ENCODE measurements at regions of chr15 and their contacts with region 1.

Region 1: GRCh38 chr15:63048115-63048775 is 5.7 kb downstream of the TPM1 start:
- DNase-seq: peak; percentile 92 to 97 (median 95)
- ATAC-seq: peak; percentile 91
- H3K4me3 ChIP-seq: peak overlapping the region; percentile 89 to 97
- H3K27ac ChIP-seq: peak overlapping the region; percentile 88 to 91
- H3K4me1 ChIP-seq: peaks cover 42 to 60% of the 10 kb centered on the region in 2 donors
- H3K27me3 ChIP-seq: peaks cover 5 to 44% of the 10 kb centered on the region in 2 donors
- CTCF ChIP-seq: peak; percentile 80 to 91

Region 2: DNA sequence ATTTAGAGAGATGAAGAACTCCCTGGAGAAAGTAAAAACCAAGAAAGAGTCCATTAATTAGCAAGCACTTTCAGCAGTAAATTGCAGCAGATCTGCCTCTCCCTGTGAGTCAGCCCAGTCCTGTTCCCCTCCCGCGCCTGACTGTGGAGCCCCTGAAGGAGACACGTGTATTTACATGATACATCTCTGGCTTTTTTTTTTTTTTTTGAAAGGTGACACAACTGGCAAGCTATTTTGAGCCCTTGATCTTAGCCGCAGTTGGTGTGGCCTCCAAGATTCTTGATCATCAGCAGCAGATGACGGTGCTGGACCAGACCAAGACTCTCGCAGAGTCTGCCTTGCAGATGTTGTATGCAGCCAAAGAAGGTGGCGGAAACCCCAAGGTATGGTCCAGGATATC is 277.5 kb before region 1 on chr15:
- intact Hi-C with region 1: no loop called
- DNase-seq: no peak
- ATAC-seq: no peak
- H3K4me3 ChIP-seq: no peak overlapping the region
- H3K27ac ChIP-seq: no peak overlapping the region
- H3K4me1 ChIP-seq: no peaks in the 10 kb centered on the region
- H3K27me3 ChIP-seq: no peaks in the 10 kb centered on the region
- CTCF ChIP-seq: no peak

Region 3: GRCh38 chr15:62782039-62782791 is 266.0 kb before region 1 on chr15:
- intact Hi-C with region 1: loop called in 1 of 2 experiments (anchors 10 kb)
- DNase-seq: peak in 3 of 4 donors; percentile 47 to 80 (median 64)
- ATAC-seq: peak; percentile 94
- H3K4me3 ChIP-seq: no peak overlapping the region
- H3K27ac ChIP-seq: no peak overlapping the region
- H3K4me1 ChIP-seq: peaks cover 0 to 9% of the 10 kb centered on the region in 2 donors
- H3K27me3 ChIP-seq: no peaks in the 10 kb centered on the region
- CTCF ChIP-seq: peak; percentile 42 to 49

Region 4: GRCh38 chr15:63093486-63094205 is 45.4 kb after region 1 on chr15:
- intact Hi-C with region 1: loop called in 1 of 2 experiments (anchors 5 kb)
- DNase-seq: peak; percentile 73 to 87 (median 81)
- ATAC-seq: peak; percentile 96
- H3K4me3 ChIP-seq: no peak overlapping the region
- H3K27ac ChIP-seq: peak overlapping the region in 1 of 2 donors; percentile 2
- H3K4me1 ChIP-seq: peaks cover 4 to 9% of the 10 kb centered on the region in 2 donors
- H3K27me3 ChIP-seq: no peaks in the 10 kb centered on the region
- CTCF ChIP-seq: peak; percentile 80 to 83

Region 5: GRCh38 chr15:63107895-63108546 is 59.8 kb after region 1 on chr15:
- intact Hi-C with region 1: no loop called
- DNase-seq: peak in 3 of 4 donors; percentile 63 to 66 (median 65)
- ATAC-seq: peak; percentile 79
- H3K4me3 ChIP-seq: no peak overlapping the region
- H3K27ac ChIP-seq: peak overlapping the region in 1 of 2 donors; percentile 33
- H3K4me1 ChIP-seq: peaks cover 0 to 3% of the 10 kb centered on the region in 2 donors
- H3K27me3 ChIP-seq: no peaks in the 10 kb centered on the region
- CTCF ChIP-seq: no peak

Region 6: DNA sequence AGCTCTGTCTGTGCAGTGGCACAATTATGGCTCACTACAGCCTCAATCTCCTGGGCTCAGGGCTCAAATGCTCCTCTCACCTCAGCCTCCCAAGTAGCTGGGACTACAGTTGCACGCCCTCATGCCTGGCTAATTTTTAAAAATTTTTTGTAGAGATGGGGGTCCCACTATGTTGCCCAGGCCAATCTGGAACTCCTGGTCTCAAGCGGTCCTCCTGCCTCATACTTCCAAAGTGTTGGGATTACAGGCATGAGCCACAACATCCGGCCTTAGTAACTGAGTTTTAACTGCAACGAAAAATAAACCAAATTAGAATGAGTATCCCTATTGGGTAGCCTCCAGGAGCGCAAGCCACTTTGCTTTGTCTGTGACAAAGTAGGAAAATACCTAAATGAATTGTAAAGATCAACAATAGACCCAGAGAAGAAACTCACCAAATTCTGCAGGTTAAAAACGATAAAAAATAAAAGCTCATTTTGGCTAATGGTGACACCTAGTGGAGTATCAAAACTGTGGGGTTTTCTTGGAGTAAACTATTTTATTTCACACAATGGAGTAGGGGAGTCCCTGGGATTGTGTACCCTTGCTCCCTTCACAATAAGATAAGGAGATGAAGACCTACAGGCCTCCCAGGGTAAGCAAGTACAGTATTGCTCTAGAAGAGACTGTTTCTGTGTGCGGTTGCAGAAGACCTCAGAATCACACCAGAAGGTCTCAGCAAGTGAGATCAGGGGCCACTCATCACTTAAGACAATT is 354.4 kb after region 1 on chr15:
- intact Hi-C with region 1: loop called in 1 of 2 experiments (anchors 10 kb)
- DNase-seq: peak in 1 of 4 donors; percentile 37
- ATAC-seq: peak; percentile 85
- H3K4me3 ChIP-seq: no peak overlapping the region
- H3K27ac ChIP-seq: no peak overlapping the region
- H3K4me1 ChIP-seq: peaks cover 0 to 10% of the 10 kb centered on the region in 2 donors
- H3K27me3 ChIP-seq: no peaks in the 10 kb centered on the region
- CTCF ChIP-seq: peak; percentile 50 to 53